ENCODE measurements at regions of chr14 and their contacts with region 1.

Region 1: GRCh38 chr14:79825046-79825521 is 386.2 kb downstream of the DIO2 start:
- DNase-seq: no peak
- H3K4me3 Mint-ChIP-seq: peak overlapping the region; percentile 21
- H3K27ac Mint-ChIP-seq: no peak overlapping the region
- H3K4me1 Mint-ChIP-seq: peaks cover 8% of the 10 kb centered on the region
- H3K27me3 Mint-ChIP-seq: no peaks in the 10 kb centered on the region
- CTCF ChIP-seq: no peak

Region 2: DNA sequence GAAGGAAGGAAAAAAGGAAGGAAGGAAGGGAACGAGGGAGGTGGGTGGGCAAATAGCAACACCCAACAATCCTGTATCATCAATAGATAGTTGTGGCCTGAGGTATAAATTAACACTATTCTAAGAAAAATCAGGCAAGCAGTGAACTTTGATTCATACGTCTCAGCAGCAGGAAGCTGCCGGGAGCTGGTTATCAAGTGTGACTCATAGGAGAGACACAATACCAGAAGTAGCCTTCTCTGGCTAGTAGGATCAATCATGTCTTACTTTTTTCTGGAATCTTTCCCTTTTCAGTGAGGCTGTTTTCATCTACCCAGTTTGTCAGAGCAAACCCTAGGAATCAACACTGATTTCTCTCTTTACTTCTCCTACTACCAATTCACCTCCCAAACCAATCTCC is 874.4 kb before region 1 on chr14:
- CTCF ChIA-PET with region 1: interaction called, 11 read pairs
- intact Hi-C with region 1: no loop called
- DNase-seq: peak; percentile 22
- H3K4me3 Mint-ChIP-seq: no peak overlapping the region
- H3K27ac Mint-ChIP-seq: no peak overlapping the region
- H3K4me1 Mint-ChIP-seq: peaks cover 13% of the 10 kb centered on the region
- H3K27me3 Mint-ChIP-seq: peaks cover under 1% of the 10 kb centered on the region
- CTCF ChIP-seq: no peak

Region 3: GRCh38 chr14:79881299-79881698 is 56.2 kb after region 1 on chr14:
- CTCF ChIA-PET with region 1: no interaction called
- intact Hi-C with region 1: no loop called
- DNase-seq: no peak
- H3K4me3 Mint-ChIP-seq: no peak overlapping the region
- H3K27ac Mint-ChIP-seq: no peak overlapping the region
- H3K4me1 Mint-ChIP-seq: no peaks in the 10 kb centered on the region
- H3K27me3 Mint-ChIP-seq: no peaks in the 10 kb centered on the region
- CTCF ChIP-seq: no peak

Measured in Calu3 (cell line).